ENCODE measurements at regions of chr17 and their contacts with region 1.

Region 1: GRCh38 chr17:45197555-45198334 is 23.9 kb upstream of the FMNL1 start:
- DNase-seq: peak; percentile 97
- ATAC-seq: peak; percentile 100
- H3K4me3 ChIP-seq: no peak overlapping the region
- H3K27ac ChIP-seq: no peak overlapping the region
- H3K4me1 ChIP-seq: peaks cover 8% of the 10 kb centered on the region
- H3K27me3 ChIP-seq: no peaks in the 10 kb centered on the region
- CTCF ChIP-seq: peak; percentile 100

Region 2: GRCh38 chr17:45135192-45135977 is 62.4 kb before region 1 on chr17 and contains the start of gene ACBD4:
- intact Hi-C with region 1: loop called (anchors 5 kb)
- DNase-seq: peak; percentile 97
- ATAC-seq: peak; percentile 90
- H3K4me3 ChIP-seq: peak within 1 kb of the TSS; percentile 89
- H3K27ac ChIP-seq: peak within 1 kb of the TSS; percentile 86
- H3K4me1 ChIP-seq: peaks cover 21% of the 10 kb centered on the region
- H3K27me3 ChIP-seq: no peaks in the 10 kb centered on the region
- CTCF ChIP-seq: peak; percentile 99
- total RNA-seq, gene ACBD4: 16.3 TPM

Region 3: DNA sequence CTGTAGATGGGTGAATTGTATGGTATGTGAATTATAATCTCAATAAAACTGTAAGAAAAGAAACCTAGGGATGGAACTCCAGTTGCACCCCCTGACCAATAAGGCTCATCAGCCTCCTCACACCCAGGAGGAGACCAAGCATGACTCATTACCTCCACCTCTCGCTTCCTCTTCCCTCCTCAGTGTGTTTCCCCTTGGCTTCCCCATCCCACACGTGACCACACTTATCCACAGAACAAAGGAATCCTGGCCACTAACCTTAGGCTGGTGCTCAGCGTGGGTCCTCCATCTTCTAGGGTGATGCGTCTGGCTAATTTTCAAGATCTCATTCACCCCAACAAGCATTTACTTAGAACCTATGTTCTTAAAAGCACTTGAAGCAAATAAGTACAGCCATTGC is 155.3 kb after region 1 on chr17:
- intact Hi-C with region 1: no loop called
- DNase-seq: peak; percentile 37
- ATAC-seq: peak; percentile 82
- H3K4me3 ChIP-seq: no peak overlapping the region
- H3K27ac ChIP-seq: no peak overlapping the region
- H3K4me1 ChIP-seq: no peaks in the 10 kb centered on the region
- H3K27me3 ChIP-seq: no peaks in the 10 kb centered on the region
- CTCF ChIP-seq: no peak

Region 4: GRCh38 chr17:45394913-45395568 is 197.3 kb after region 1 on chr17:
- intact Hi-C with region 1: no loop called
- DNase-seq: peak; percentile 75
- ATAC-seq: peak; percentile 79
- H3K4me3 ChIP-seq: no peak overlapping the region
- H3K27ac ChIP-seq: no peak overlapping the region
- H3K4me1 ChIP-seq: no peaks in the 10 kb centered on the region
- H3K27me3 ChIP-seq: no peaks in the 10 kb centered on the region
- CTCF ChIP-seq: peak; percentile 68

Region 5: DNA sequence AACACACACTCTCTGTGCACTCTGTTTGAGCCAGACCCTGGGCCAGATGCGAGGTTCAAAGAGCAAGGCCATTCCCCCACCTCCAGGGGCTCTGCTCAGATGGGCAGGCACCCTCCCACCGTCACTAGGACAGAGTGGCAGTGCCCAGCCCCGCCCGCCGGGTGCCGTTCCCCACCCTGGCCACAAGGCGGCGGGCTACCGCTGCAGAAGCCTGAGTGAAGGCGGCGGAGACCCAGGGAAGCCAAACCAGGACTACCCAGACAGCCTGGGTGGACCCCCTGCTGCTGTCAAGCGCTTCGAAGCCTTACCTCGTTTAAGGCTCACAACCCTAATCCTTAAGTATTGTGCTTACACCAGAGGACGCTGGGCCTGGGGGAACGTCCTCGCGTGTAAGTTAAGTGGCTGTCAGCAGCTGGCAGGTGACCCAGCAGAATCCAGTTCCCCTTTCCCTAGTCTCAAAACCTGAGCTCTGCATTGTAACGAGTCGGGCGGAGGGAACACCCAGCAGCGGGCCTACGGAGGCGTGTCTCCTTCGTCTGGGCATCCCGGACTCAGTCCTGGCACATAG is 230.4 kb after region 1 on chr17:
- intact Hi-C with region 1: no loop called
- DNase-seq: peak; percentile 88
- ATAC-seq: peak; percentile 62
- H3K4me3 ChIP-seq: peak overlapping the region; percentile 2
- H3K27ac ChIP-seq: peak overlapping the region; percentile 38
- H3K4me1 ChIP-seq: peaks cover 31% of the 10 kb centered on the region
- H3K27me3 ChIP-seq: no peaks in the 10 kb centered on the region
- CTCF ChIP-seq: peak; percentile 99